ENCODE measurements at regions of chr5 and their contacts with region 1.

Region 1: GRCh38 chr5:110625376-110625999 is 101.0 kb downstream of the TMEM232 start:
- DNase-seq: peak; percentile 33
- H3K4me3 ChIP-seq: no peak overlapping the region
- H3K27ac ChIP-seq: no peak overlapping the region
- H3K4me1 ChIP-seq: no peaks in the 10 kb centered on the region
- H3K27me3 ChIP-seq: no peaks in the 10 kb centered on the region
- CTCF ChIP-seq: peak in 1 of 2 donors; percentile 12
- POLR2A ChIP-seq: no peak

Region 2: GRCh38 chr5:109580225-109581015 is 1045.1 kb before region 1 on chr5:
- CTCF ChIA-PET with region 1: interaction called, 12 read pairs
- POLR2A ChIA-PET with region 1: no interaction called
- dilution Hi-C with region 1: no loop called
- intact Hi-C with region 1: loop called (anchors 10 kb)
- DNase-seq: no peak
- H3K4me3 ChIP-seq: no peak overlapping the region
- H3K27ac ChIP-seq: no peak overlapping the region
- H3K4me1 ChIP-seq: no peaks in the 10 kb centered on the region
- H3K27me3 ChIP-seq: no peaks in the 10 kb centered on the region
- CTCF ChIP-seq: no peak
- POLR2A ChIP-seq: no peak

Region 3: GRCh38 chr5:109589986-109590385 is 1035.5 kb before region 1 on chr5:
- CTCF ChIA-PET with region 1: interaction called, 21 read pairs
- POLR2A ChIA-PET with region 1: no interaction called
- dilution Hi-C with region 1: no loop called
- intact Hi-C with region 1: loop called (anchors 10 kb)
- DNase-seq: peak; percentile 2
- H3K4me3 ChIP-seq: no peak overlapping the region
- H3K27ac ChIP-seq: no peak overlapping the region
- H3K4me1 ChIP-seq: no peaks in the 10 kb centered on the region
- H3K27me3 ChIP-seq: no peaks in the 10 kb centered on the region
- CTCF ChIP-seq: no peak
- POLR2A ChIP-seq: no peak

Region 4: GRCh38 chr5:110638970-110639902 is 13.7 kb after region 1 on chr5:
- CTCF ChIA-PET with region 1: interaction called, 10 read pairs
- POLR2A ChIA-PET with region 1: no interaction called
- dilution Hi-C with region 1: no loop called
- intact Hi-C with region 1: no loop called
- DNase-seq: no peak
- H3K4me3 ChIP-seq: no peak overlapping the region
- H3K27ac ChIP-seq: no peak overlapping the region
- H3K4me1 ChIP-seq: no peaks in the 10 kb centered on the region
- H3K27me3 ChIP-seq: no peaks in the 10 kb centered on the region
- CTCF ChIP-seq: no peak
- POLR2A ChIP-seq: no peak